ENCODE measurements at regions of chr1 and their contacts with region 1.

Region 1: GRCh38 chr1:60765204-60765603 is 317.2 kb upstream of the NFIA start:
- DNase-seq: no peak
- ATAC-seq: no peak
- H3K4me3 ChIP-seq: no peak overlapping the region
- H3K27ac ChIP-seq: no peak overlapping the region
- H3K4me1 ChIP-seq: no peaks in the 10 kb centered on the region
- H3K27me3 ChIP-seq: no peaks in the 10 kb centered on the region
- CTCF ChIP-seq: peak; percentile 42

Region 2: DNA sequence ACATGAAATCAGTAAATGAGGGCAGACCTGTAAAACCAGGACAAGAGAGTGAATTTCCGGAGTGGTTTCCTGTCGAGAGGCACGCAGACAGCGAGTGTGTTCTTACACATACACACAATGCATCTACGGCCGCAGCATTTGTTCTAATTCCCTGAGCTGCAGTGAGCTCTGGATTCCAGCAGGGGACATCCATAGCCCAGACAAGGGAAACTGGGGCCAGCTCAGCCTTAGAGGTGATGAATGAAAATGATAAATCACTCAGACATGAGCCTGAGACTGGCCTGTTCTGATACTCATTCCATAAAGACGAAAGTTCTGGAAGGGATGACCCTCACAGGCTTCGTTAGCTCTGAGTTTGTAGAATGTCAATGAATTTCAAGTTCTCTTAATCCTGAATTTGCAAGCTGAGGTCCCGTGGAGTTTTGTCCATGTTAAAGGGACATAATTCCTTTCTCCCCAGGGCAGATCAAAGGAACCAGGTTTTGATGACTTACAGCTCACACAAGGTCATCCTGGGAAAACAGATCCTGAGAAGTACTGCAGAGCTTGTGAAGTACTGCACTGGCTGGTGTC is 483.8 kb before region 1 on chr1:
- intact Hi-C with region 1: loop called in 1 of 2 experiments (anchors 10 kb)
- DNase-seq: peak; percentile 35 to 54
- ATAC-seq: peak; percentile 85 to 96 (median 88)
- H3K4me3 ChIP-seq: no peak overlapping the region
- H3K27ac ChIP-seq: no peak overlapping the region
- H3K4me1 ChIP-seq: no peaks in the 10 kb centered on the region
- H3K27me3 ChIP-seq: no peaks in the 10 kb centered on the region
- CTCF ChIP-seq: peak; percentile 84

Region 3: GRCh38 chr1:60942896-60943638 is 177.9 kb after region 1 on chr1:
- intact Hi-C with region 1: no loop called
- DNase-seq: no peak
- ATAC-seq: peak; percentile 77 to 96 (median 90)
- H3K4me3 ChIP-seq: no peak overlapping the region
- H3K27ac ChIP-seq: peak overlapping the region; percentile 54
- H3K4me1 ChIP-seq: peaks cover 4% of the 10 kb centered on the region
- H3K27me3 ChIP-seq: no peaks in the 10 kb centered on the region
- CTCF ChIP-seq: no peak

Region 4: DNA sequence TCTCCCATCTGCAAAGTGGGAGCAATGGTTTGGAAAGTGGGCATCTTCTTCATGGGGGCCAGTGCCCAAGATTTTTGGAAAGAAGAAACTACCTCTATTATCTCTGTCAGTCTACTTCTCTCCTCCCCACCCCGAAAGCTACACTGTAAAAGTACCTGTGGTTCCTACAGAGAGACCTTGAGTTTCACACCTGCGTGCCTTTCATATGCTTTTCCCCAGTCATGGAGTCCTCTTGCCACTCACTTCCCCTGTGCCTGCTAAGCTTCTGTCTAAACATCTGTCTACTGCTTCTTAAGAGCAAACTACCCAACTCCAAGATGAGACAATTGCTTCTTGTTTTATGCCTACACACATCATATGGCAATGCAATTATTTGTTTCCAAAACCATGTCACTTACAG is 1238.6 kb after region 1 on chr1:
- intact Hi-C with region 1: no loop called
- DNase-seq: no peak
- ATAC-seq: no peak
- H3K4me3 ChIP-seq: no peak overlapping the region
- H3K27ac ChIP-seq: no peak overlapping the region
- H3K4me1 ChIP-seq: peaks cover 3% of the 10 kb centered on the region
- H3K27me3 ChIP-seq: no peaks in the 10 kb centered on the region
- CTCF ChIP-seq: no peak

Measured in psoas muscle (tissue), 8 donors.